ENCODE measurements at regions of chr1 and their contacts with region 1.

Region 1: GRCh38 chr1:235971571-235972310 is 93.1 kb downstream of the NID1 start:
- DNase-seq: peak; percentile 94
- ATAC-seq: peak; percentile 99
- H3K4me3 Mint-ChIP-seq: peak overlapping the region; percentile 75
- H3K27ac Mint-ChIP-seq: peak overlapping the region; percentile 91
- H3K4me1 Mint-ChIP-seq: peaks cover 22% of the 10 kb centered on the region
- H3K27me3 Mint-ChIP-seq: peaks cover 2% of the 10 kb centered on the region

Region 2: GRCh38 chr1:235513495-235514366 is 458.0 kb before region 1 on chr1:
- CTCF ChIA-PET with region 1: interaction called, 18 read pairs
- POLR2A ChIA-PET with region 1: no interaction called
- DNase-seq: peak; percentile 62
- ATAC-seq: peak; percentile 71
- H3K4me3 Mint-ChIP-seq: no peak overlapping the region
- H3K27ac Mint-ChIP-seq: no peak overlapping the region
- H3K4me1 Mint-ChIP-seq: no peaks in the 10 kb centered on the region
- H3K27me3 Mint-ChIP-seq: peaks cover 21% of the 10 kb centered on the region

Region 3: GRCh38 chr1:235767795-235768194 is 203.9 kb before region 1 on chr1:
- CTCF ChIA-PET with region 1: interaction called, 13 read pairs
- POLR2A ChIA-PET with region 1: no interaction called
- DNase-seq: no peak
- ATAC-seq: no peak
- H3K4me3 Mint-ChIP-seq: no peak overlapping the region
- H3K27ac Mint-ChIP-seq: no peak overlapping the region
- H3K4me1 Mint-ChIP-seq: peaks cover 9% of the 10 kb centered on the region
- H3K27me3 Mint-ChIP-seq: no peaks in the 10 kb centered on the region

Region 4: DNA sequence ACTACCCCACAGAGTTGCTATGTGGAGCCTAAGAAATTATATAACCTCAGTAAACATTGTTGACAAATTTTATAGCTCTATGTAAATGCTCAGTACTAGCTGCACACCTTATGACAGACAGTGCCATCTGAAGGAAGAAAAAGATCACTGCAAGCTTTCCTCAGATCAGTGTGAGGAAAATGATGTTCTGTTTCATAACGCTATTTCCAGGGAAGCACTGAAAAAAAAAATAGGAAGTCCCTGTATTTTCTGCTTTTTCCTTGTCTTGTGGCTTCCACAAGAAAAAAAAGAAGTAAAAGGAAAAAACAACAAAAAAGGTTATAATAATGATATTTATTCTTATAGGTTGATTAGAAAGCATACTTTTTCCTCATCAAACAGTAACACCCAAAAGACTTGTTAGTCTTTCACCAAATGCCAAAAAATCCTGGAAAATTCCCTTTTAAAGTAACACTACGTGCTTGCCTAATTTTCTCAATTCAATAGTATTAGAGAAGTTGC is 128.2 kb before region 1 on chr1:
- CTCF ChIA-PET with region 1: interaction called, 49 read pairs
- POLR2A ChIA-PET with region 1: interaction called, 4 read pairs
- DNase-seq: no peak
- ATAC-seq: peak; percentile 65
- H3K4me3 Mint-ChIP-seq: no peak overlapping the region
- H3K27ac Mint-ChIP-seq: no peak overlapping the region
- H3K4me1 Mint-ChIP-seq: peaks cover 57% of the 10 kb centered on the region
- H3K27me3 Mint-ChIP-seq: no peaks in the 10 kb centered on the region

Region 5: GRCh38 chr1:235888119-235888643 is 83.6 kb before region 1 on chr1:
- CTCF ChIA-PET with region 1: interaction called, 17 read pairs
- POLR2A ChIA-PET with region 1: interaction called, 3 read pairs
- DNase-seq: peak; percentile 79
- ATAC-seq: peak; percentile 97
- H3K4me3 Mint-ChIP-seq: peak overlapping the region; percentile 72
- H3K27ac Mint-ChIP-seq: peak overlapping the region; percentile 97
- H3K4me1 Mint-ChIP-seq: peaks cover 62% of the 10 kb centered on the region
- H3K27me3 Mint-ChIP-seq: no peaks in the 10 kb centered on the region

Region 6: DNA sequence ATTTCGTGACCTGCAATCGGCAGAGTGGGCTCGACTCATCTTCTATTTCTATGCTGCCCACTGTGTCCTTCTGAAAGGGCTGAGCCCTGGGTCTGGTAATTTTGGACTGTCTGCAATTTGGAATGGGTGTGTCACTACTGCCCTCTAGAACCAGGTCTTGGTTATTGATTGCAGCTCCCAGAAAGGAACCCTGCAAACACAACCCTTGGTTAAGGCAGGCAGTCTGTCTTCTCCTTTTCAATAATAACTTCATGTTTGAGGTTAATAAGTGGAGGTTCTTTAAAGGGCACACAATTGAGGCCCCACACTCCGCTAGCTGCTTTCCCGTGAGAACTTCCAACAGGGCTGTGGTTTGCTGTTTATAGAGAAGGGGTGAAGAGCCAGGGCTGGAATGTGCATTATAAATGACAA is 25.2 kb before region 1 on chr1:
- CTCF ChIA-PET with region 1: interaction called, 127 read pairs
- POLR2A ChIA-PET with region 1: no interaction called
- DNase-seq: no peak
- ATAC-seq: peak; percentile 46
- H3K4me3 Mint-ChIP-seq: no peak overlapping the region
- H3K27ac Mint-ChIP-seq: no peak overlapping the region
- H3K4me1 Mint-ChIP-seq: peaks cover 13% of the 10 kb centered on the region
- H3K27me3 Mint-ChIP-seq: no peaks in the 10 kb centered on the region

Region 7: DNA sequence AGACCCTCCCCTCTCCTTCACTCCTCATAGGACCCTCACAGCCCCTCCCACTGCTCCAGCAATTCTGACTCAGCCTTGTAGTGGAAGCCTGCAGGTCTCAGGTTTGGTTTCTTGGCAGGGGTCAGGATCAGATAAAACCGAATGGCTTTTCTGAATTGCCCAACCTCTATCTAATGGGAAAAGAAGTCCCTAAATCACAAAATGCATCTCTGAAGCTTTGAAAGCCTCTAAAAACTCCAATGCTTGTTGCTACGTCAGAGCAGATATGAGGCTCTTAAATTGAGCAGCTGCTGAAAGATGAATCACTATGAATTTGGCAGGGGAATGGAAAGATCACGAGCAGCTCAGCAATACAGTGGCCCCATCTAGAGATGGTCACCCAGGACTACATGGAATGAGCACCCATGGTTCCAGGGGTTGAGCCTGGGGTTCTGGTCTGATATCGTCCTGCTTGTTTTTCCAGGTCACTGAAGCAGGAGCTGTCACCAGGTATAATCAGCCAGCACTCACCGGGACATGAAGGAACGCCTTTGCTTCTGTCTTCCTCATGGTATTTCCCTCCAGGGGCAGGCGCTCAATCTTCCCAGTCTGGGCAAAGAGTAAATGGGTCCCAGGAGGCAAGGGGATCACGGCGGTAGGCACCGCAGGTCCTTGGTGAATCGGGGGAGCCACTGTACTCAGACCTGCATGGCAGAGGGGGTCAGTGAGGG is 18.8 kb after region 1 on chr1:
- CTCF ChIA-PET with region 1: interaction called, 21 read pairs
- POLR2A ChIA-PET with region 1: no interaction called
- DNase-seq: no peak
- ATAC-seq: no peak
- H3K4me3 Mint-ChIP-seq: no peak overlapping the region
- H3K27ac Mint-ChIP-seq: no peak overlapping the region
- H3K4me1 Mint-ChIP-seq: peaks cover 2% of the 10 kb centered on the region
- H3K27me3 Mint-ChIP-seq: peaks cover 16% of the 10 kb centered on the region

Measured in activated CD8-positive, alpha-beta T cell treated with anti-CD3 and anti-CD28 coated beads, Interleukin-2, amount 10 ng/mL, durations not matched to agents 7 days and 5 days (primary cell).